Natural killer cell (primary cell): ENCODE measurements at regions of chr21 and their contacts with region 1.

Region 1: DNA sequence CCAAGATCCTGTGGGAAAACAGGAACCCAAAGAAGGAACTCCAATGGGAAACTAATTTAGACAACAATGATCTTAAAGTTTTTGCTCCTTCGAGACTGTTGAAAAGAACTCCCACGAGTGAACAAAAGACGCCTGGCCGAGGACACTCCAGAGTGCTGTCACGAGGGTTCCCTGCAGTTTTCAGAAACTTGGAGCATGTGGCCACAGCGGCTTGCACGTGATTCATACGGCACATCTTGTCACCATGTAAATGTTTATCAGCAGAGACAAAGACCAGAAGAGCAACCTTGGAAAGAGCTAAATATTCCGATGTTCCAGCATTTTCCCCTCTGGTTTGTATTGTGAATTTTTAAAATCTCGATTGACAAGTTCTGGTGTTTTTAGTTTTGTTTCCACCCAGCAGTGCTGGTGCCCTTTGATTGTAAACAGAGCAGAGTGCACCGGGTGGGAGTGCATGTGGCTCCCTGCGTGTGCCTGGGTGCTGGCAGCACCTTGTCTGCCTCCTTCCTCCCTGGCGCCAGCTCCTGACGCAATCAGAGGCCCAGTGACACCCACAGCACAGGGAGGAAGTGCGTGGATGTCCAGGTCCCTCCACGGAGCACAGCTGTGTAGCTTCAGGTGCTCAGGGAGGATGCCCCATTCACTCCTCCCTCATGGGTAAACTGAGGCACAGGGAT is 23.0 kb downstream of the LRRC3 start:
- DNase-seq: no peak
- ATAC-seq: no peak
- H3K4me3 ChIP-seq: no peak overlapping the region
- H3K4me3 Mint-ChIP-seq: no peak overlapping the region
- H3K27ac ChIP-seq: no peak overlapping the region
- H3K27ac Mint-ChIP-seq: no peak overlapping the region
- H3K4me1 ChIP-seq: peaks cover 9% of the 10 kb centered on the region
- H3K4me1 Mint-ChIP-seq: no peaks in the 10 kb centered on the region
- H3K27me3 ChIP-seq: no peaks in the 10 kb centered on the region
- H3K27me3 Mint-ChIP-seq: peaks cover 5 to 11% of the 10 kb centered on the region in 2 donors
- CTCF ChIP-seq: no peak

Region 2: GRCh38 chr21:44370027-44370735 is 108.1 kb before region 1 on chr21:
- intact Hi-C with region 1: loop called (anchors 10 kb)
- DNase-seq: no peak
- ATAC-seq: peak in 1 of 3 donors; percentile 48
- H3K4me3 ChIP-seq: no peak overlapping the region
- H3K4me3 Mint-ChIP-seq: no peak overlapping the region
- H3K27ac ChIP-seq: no peak overlapping the region
- H3K27ac Mint-ChIP-seq: no peak overlapping the region
- H3K4me1 ChIP-seq: peaks cover 20% of the 10 kb centered on the region
- H3K4me1 Mint-ChIP-seq: peaks cover 30 to 40% of the 10 kb centered on the region in 2 donors
- H3K27me3 ChIP-seq: peaks cover 6% of the 10 kb centered on the region
- H3K27me3 Mint-ChIP-seq: peaks cover 0 to 3% of the 10 kb centered on the region in 2 donors
- CTCF ChIP-seq: no peak

Region 3: GRCh38 chr21:44505673-44506278 is 27.5 kb after region 1 on chr21:
- intact Hi-C with region 1: no loop called
- DNase-seq: no peak
- ATAC-seq: no peak
- H3K4me3 ChIP-seq: no peak overlapping the region
- H3K4me3 Mint-ChIP-seq: no peak overlapping the region
- H3K27ac ChIP-seq: no peak overlapping the region
- H3K27ac Mint-ChIP-seq: no peak overlapping the region
- H3K4me1 ChIP-seq: peaks cover 17% of the 10 kb centered on the region
- H3K4me1 Mint-ChIP-seq: peaks cover 0 to 6% of the 10 kb centered on the region in 2 donors
- H3K27me3 ChIP-seq: no peaks in the 10 kb centered on the region
- H3K27me3 Mint-ChIP-seq: peaks cover 0 to 3% of the 10 kb centered on the region in 2 donors
- CTCF ChIP-seq: no peak

Region 4: GRCh38 chr21:44517175-44517899 is 39.1 kb after region 1 on chr21:
- intact Hi-C with region 1: no loop called
- DNase-seq: no peak
- ATAC-seq: peak in 1 of 3 donors; percentile 22
- H3K4me3 ChIP-seq: no peak overlapping the region
- H3K4me3 Mint-ChIP-seq: no peak overlapping the region
- H3K27ac ChIP-seq: no peak overlapping the region
- H3K27ac Mint-ChIP-seq: no peak overlapping the region
- H3K4me1 ChIP-seq: no peaks in the 10 kb centered on the region
- H3K4me1 Mint-ChIP-seq: peaks cover 5 to 6% of the 10 kb centered on the region in 2 donors
- H3K27me3 ChIP-seq: no peaks in the 10 kb centered on the region
- H3K27me3 Mint-ChIP-seq: peaks cover 3 to 6% of the 10 kb centered on the region in 2 donors
- CTCF ChIP-seq: no peak